Activated CD8-positive, alpha-beta memory T cell treated with anti-CD3 and anti-CD28 coated beads, Interleukin-2, amount 10 ng/mL, durations not matched to agents 7 days and 5 days (primary cell): ENCODE measurements at regions of chrX and their contacts with region 1.

Region 1: GRCh38 chrX:115330498-115331168 is 41.1 kb downstream of the LUZP4 start:
- DNase-seq: no peak
- ATAC-seq: no peak
- H3K4me3 Mint-ChIP-seq: no peak overlapping the region
- H3K27ac Mint-ChIP-seq: no peak overlapping the region
- H3K4me1 Mint-ChIP-seq: no peaks in the 10 kb centered on the region
- H3K27me3 Mint-ChIP-seq: no peaks in the 10 kb centered on the region

Region 2: DNA sequence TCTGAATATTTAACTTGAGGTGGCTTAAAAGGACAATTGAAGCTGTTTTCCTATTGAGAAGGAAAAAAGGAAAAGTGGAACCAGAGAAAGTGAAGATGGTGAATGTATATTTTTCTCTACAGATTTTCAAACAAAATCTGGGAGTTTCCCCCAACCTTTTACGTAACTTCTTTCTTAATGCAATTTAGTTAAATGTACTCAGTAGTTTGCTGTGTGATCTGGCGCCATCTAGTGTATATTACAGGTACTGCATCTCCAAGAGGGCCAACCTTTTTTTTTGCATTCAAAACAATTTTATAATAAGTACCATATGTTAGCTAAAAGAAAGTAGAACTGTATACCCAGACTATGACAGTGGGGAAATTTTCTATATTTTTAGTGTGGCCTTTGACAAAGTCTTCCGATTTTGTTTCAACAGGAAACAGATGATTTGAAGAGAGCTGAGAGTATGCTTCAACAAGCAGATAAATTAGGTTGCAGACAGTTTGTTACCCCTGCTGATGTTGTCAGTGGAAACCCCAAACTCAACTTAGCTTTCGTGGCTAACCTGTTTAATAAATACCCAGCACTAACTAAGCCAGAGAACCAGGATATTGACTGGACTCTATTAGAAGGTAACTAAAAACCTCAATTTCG is 312.4 kb after region 1 on chrX:
- CTCF ChIA-PET with region 1: interaction called, 12 read pairs
- DNase-seq: peak; percentile 40
- ATAC-seq: no peak
- H3K4me3 Mint-ChIP-seq: no peak overlapping the region
- H3K27ac Mint-ChIP-seq: no peak overlapping the region
- H3K4me1 Mint-ChIP-seq: no peaks in the 10 kb centered on the region
- H3K27me3 Mint-ChIP-seq: no peaks in the 10 kb centered on the region